Panc1 (cell line): ENCODE measurements at regions of chr3 and their contacts with region 1.

Region 1: DNA sequence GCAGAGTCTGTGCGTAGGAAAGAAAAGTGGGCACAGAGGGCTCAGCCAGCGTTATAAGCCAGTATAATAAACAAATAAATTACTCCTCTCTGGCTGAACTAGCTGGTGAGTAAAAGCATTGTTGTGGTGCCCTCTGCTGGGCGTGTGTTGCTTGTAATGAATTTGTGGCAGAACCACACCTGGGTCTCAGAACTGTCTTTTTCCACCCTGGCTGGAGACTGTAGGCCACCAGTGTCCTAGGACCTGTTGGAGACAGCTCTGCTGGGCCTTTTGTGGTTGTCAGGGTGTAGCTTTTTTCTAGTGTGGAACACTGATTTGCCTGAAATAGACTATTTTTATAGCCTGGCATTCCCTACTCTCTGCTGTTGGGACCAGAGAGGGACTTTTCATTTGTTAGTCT is 130.5 kb upstream of the EIF1B start:
- DNase-seq: peak; percentile 36
- ATAC-seq: peak; percentile 84
- H3K4me3 ChIP-seq: no peak overlapping the region
- H3K27ac ChIP-seq: no peak overlapping the region
- H3K4me1 ChIP-seq: no peaks in the 10 kb centered on the region
- H3K27me3 ChIP-seq: no peaks in the 10 kb centered on the region
- CTCF ChIP-seq: peak; percentile 71

Region 2: DNA sequence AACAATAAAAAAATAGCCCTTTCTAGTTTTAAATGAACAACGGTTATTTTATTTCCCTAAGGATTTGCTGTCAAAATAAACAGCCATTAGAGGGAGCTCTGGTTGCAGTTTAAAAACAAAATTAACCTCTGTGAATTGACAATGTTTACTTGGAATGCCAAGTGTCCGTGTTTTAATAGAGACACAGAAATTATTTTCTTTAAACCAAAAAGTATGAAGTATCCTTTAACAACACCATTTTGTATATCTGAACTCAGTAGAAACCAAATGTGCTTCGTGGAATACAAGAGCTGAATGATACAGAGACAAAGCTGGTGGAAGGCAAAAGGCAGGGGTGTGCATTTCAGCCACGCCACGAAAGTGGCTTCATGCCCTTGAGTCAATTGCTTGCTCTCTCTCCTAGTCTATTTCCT is 637.1 kb before region 1 on chr3:
- CTCF ChIA-PET with region 1: no interaction called
- POLR2A ChIA-PET with region 1: no interaction called
- in situ Hi-C with region 1: no loop called
- intact Hi-C with region 1: loop called (anchors 2 kb)
- DNase-seq: no peak
- ATAC-seq: no peak
- H3K4me3 ChIP-seq: no peak overlapping the region
- H3K27ac ChIP-seq: no peak overlapping the region
- H3K4me1 ChIP-seq: no peaks in the 10 kb centered on the region
- H3K27me3 ChIP-seq: no peaks in the 10 kb centered on the region
- CTCF ChIP-seq: peak; percentile 62; the same call in 1 of the 2 replicates

Region 3: GRCh38 chr3:39812537-39812936 is 366.5 kb before region 1 on chr3:
- CTCF ChIA-PET with region 1: no interaction called
- POLR2A ChIA-PET with region 1: no interaction called
- in situ Hi-C with region 1: no loop called
- intact Hi-C with region 1: loop called (anchors 10 kb)
- DNase-seq: no peak
- ATAC-seq: no peak
- H3K4me3 ChIP-seq: no peak overlapping the region
- H3K27ac ChIP-seq: no peak overlapping the region
- H3K4me1 ChIP-seq: no peaks in the 10 kb centered on the region
- H3K27me3 ChIP-seq: no peaks in the 10 kb centered on the region
- CTCF ChIP-seq: peak; percentile 56

Region 4: DNA sequence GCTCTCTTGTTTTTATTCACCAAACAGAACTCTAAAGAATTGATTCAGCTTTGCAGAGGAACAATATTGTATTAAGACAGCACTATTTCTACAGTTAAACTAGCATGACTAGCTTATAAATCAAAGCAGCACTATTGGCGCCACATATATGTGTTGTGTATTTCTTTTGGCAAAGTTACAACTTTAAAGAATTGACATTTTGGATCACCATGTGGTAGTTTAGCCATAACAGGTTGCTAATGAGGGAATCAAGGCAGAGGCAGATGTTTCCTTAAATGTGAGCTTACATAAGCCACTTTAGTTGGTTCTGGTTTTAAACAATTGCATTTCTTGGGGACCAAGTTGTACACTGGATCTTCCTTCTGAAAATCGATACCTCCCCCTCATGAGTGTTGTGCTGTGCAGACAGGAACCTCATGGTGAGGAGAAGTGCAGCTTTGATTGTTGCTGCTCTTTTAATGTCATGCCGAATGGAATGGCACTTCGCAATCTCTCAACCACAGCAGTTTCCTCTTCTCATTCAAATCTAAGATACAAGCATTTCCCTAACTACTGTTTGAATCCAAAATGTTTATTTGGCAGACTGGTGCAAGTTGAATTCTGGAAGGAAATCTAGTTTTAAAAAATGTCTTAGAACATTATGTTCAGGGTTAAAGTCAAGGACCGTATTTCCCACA is 218.4 kb before region 1 on chr3:
- CTCF ChIA-PET with region 1: no interaction called
- POLR2A ChIA-PET with region 1: no interaction called
- in situ Hi-C with region 1: no loop called
- intact Hi-C with region 1: no loop called
- DNase-seq: no peak
- ATAC-seq: no peak
- H3K4me3 ChIP-seq: no peak overlapping the region
- H3K27ac ChIP-seq: no peak overlapping the region
- H3K4me1 ChIP-seq: no peaks in the 10 kb centered on the region
- H3K27me3 ChIP-seq: no peaks in the 10 kb centered on the region
- CTCF ChIP-seq: no peak

Region 5: GRCh38 chr3:40009991-40010390 is 169.0 kb before region 1 on chr3:
- CTCF ChIA-PET with region 1: interaction called, 3 read pairs
- POLR2A ChIA-PET with region 1: no interaction called
- in situ Hi-C with region 1: no loop called
- intact Hi-C with region 1: loop called (anchors 10 kb)
- DNase-seq: no peak
- ATAC-seq: no peak
- H3K4me3 ChIP-seq: no peak overlapping the region
- H3K27ac ChIP-seq: no peak overlapping the region
- H3K4me1 ChIP-seq: no peaks in the 10 kb centered on the region
- H3K27me3 ChIP-seq: no peaks in the 10 kb centered on the region
- CTCF ChIP-seq: no peak

Region 6: GRCh38 chr3:40237889-40238571 is 59.0 kb after region 1 on chr3:
- CTCF ChIA-PET with region 1: no interaction called
- POLR2A ChIA-PET with region 1: no interaction called
- in situ Hi-C with region 1: no loop called
- intact Hi-C with region 1: no loop called
- DNase-seq: no peak
- ATAC-seq: no peak; the same call in 1 of the 2 replicates
- H3K4me3 ChIP-seq: no peak overlapping the region
- H3K27ac ChIP-seq: no peak overlapping the region
- H3K4me1 ChIP-seq: no peaks in the 10 kb centered on the region
- H3K27me3 ChIP-seq: no peaks in the 10 kb centered on the region
- CTCF ChIP-seq: peak; percentile 18; the same call in 1 of the 2 replicates